Activated CD4-positive, alpha-beta memory T cell treated with anti-CD3 and anti-CD28 coated beads for 36 hours (primary cell): ENCODE measurements at regions of chr2 and their contacts with region 1.

Region 1: GRCh38 chr2:227238238-227239237 is 74.1 kb downstream of the COL4A3 start:
- DNase-seq: peak; percentile 70
- H3K4me3 Mint-ChIP-seq: no peak overlapping the region
- H3K27ac Mint-ChIP-seq: no peak overlapping the region
- H3K4me1 Mint-ChIP-seq: no peaks in the 10 kb centered on the region
- H3K27me3 Mint-ChIP-seq: peaks cover 6% of the 10 kb centered on the region

Region 2: DNA sequence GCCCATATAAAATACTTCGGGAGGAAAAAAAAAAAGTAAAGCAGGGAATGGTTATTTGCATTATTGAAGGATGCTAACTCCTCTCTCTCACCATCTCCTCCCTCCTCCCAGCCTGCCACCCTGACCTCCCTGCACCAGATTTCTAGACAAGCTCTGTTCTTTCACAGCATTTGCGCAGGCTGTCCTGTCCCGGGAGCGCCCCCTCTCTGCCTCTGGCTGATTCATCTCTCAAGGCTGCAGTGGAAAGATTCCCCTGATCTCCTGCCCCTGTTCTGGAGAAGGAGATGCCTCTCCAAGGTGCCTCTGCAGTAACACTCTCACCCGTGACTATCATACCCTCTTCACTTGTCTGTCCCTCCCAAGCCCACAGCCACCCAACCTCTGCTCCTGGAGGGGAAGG is 113.0 kb before region 1 on chr2:
- CTCF ChIA-PET with region 1: interaction called, 104 read pairs
- POLR2A ChIA-PET with region 1: no interaction called
- intact Hi-C with region 1: loop called (anchors 1 kb)
- DNase-seq: no peak
- H3K4me3 Mint-ChIP-seq: no peak overlapping the region
- H3K27ac Mint-ChIP-seq: no peak overlapping the region
- H3K4me1 Mint-ChIP-seq: no peaks in the 10 kb centered on the region
- H3K27me3 Mint-ChIP-seq: peaks cover 13% of the 10 kb centered on the region

Region 3: DNA sequence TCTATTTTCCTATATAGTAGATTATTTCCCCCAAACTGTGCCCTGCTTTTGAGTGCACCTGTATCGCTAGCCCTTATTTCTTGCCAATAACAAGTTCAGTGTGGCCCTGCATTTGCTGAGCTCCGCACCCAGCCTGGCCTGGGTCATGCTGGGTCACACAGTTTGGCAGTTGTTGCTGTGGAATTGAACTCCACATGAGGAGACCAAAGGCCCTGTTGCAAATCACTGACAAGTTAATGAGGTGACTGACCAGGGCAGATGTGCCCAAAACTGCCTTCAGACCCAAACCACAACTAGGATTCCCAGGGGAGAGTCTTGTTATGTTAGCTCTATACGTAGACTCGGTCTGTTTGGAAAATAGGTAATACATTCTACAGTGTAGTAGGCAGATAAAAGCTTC is 105.6 kb before region 1 on chr2:
- CTCF ChIA-PET with region 1: interaction called, 104 read pairs
- POLR2A ChIA-PET with region 1: no interaction called
- intact Hi-C with region 1: loop called (anchors 1 kb)
- DNase-seq: no peak
- H3K4me3 Mint-ChIP-seq: no peak overlapping the region
- H3K27ac Mint-ChIP-seq: no peak overlapping the region
- H3K4me1 Mint-ChIP-seq: no peaks in the 10 kb centered on the region
- H3K27me3 Mint-ChIP-seq: peaks cover 5% of the 10 kb centered on the region

Region 4: GRCh38 chr2:227228061-227228667 is 10.4 kb before region 1 on chr2:
- CTCF ChIA-PET with region 1: interaction called, 17 read pairs
- POLR2A ChIA-PET with region 1: no interaction called
- intact Hi-C with region 1: no loop called
- DNase-seq: no peak
- H3K4me3 Mint-ChIP-seq: no peak overlapping the region
- H3K27ac Mint-ChIP-seq: no peak overlapping the region
- H3K4me1 Mint-ChIP-seq: no peaks in the 10 kb centered on the region
- H3K27me3 Mint-ChIP-seq: peaks cover 7% of the 10 kb centered on the region

Region 5: DNA sequence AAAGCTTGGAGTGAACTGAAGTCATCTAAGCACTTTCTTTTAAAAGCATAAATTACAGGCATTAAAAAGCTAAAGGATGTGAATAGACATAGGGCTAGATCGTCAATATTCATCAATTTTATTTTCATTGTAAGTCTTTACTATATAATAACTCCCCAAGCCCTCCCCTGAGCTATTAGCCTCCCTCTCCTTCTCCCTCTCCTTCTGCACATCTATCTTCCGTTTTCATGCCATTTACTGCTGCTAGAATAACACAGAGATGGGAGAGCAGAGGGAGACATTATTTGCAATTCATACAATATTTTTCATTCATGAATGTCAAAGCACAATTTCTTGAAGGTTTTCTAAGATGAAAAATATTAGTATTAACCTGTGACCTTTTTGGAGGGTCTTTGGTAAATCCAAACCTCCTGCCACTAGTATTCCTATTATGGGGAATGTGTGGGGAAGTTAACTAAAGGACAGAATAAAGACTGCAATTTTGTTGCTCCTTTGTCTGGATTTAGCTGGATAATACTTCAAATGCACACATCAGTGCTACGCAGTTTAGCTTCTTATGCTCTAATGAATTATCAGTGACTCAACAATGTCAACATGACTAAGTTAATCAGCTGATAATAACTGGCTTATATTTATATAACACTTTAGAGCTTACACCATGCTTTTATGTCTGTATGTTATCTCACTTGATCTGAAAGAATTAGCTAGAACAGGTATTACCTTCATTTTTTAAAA is 58.3 kb after region 1 on chr2:
- CTCF ChIA-PET with region 1: interaction called, 13 read pairs
- POLR2A ChIA-PET with region 1: no interaction called
- intact Hi-C with region 1: no loop called
- DNase-seq: no peak
- H3K4me3 Mint-ChIP-seq: no peak overlapping the region
- H3K27ac Mint-ChIP-seq: no peak overlapping the region
- H3K4me1 Mint-ChIP-seq: no peaks in the 10 kb centered on the region
- H3K27me3 Mint-ChIP-seq: no peaks in the 10 kb centered on the region

Region 6: GRCh38 chr2:227310751-227311100 is 72.2 kb after region 1 on chr2:
- CTCF ChIA-PET with region 1: no interaction called
- POLR2A ChIA-PET with region 1: no interaction called
- intact Hi-C with region 1: no loop called
- DNase-seq: no peak
- H3K4me3 Mint-ChIP-seq: no peak overlapping the region
- H3K27ac Mint-ChIP-seq: no peak overlapping the region
- H3K4me1 Mint-ChIP-seq: no peaks in the 10 kb centered on the region
- H3K27me3 Mint-ChIP-seq: peaks cover 4% of the 10 kb centered on the region